ENCODE measurements at regions of chr17 and their contacts with region 1.

Region 1: GRCh38 chr17:73429440-73430164 is 117.8 kb upstream of the CDC42EP4 start:
- DNase-seq: peak; percentile 80 to 90 (median 88)
- H3K4me3 ChIP-seq: peak overlapping the region in 3 of 59 donors; percentile 8 to 31 (median 28)
- H3K27ac ChIP-seq: no peak overlapping the region
- H3K27me3 ChIP-seq: no peaks in the 10 kb centered on the region
- CTCF ChIP-seq: peak; percentile 80 to 100 (median 98)

Region 2: DNA sequence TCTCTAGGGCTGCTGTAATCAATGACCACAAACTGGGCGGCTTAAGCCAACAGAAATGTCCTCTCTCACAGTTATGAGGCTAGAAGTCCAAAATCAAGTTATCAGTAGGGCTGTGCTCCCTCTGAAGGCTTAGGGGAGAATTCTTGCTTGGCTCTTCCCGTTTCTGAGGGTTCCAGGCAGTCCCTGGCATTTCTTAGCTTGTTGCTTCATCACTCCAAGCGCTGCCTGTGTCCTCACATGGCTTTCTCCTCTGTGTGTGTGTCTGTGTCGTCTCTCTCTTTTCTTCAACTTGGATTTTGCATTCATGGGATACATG is 104.1 kb before region 1 on chr17:
- intact Hi-C with region 1: no loop called
- DNase-seq: no peak
- H3K4me3 ChIP-seq: no peak overlapping the region
- H3K27ac ChIP-seq: no peak overlapping the region
- H3K27me3 ChIP-seq: no peaks in the 10 kb centered on the region
- CTCF ChIP-seq: no peak

Region 3: DNA sequence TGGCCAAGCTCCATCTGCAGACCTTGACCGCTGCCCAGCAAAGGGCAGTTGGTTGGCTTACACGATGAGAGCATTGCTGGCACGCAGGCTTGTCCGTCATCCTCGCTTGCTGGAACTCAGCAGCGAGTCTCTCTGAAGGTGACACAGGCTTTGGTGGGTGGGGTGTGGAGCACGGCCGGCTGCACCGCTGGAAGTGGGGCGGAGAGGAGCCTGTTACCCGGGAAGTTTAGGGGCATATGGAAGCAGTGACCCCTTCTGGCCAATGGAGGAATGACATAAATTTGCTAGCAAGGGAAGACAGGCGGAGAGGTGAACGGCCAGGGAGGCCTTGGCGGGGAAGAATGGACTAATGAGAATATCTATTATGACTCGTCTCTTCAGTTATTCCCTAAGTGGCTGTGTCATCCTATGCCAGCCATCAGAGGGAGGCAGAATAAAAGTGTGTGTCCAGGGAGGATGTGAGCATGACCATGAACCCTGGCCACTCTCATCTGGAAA is 280.5 kb after region 1 on chr17:
- intact Hi-C with region 1: loop called in 1 of 2 experiments (anchors 5 kb)
- DNase-seq: peak in 6 of 10 donors; percentile 38 to 59 (median 48)
- H3K4me3 ChIP-seq: peak overlapping the region in 1 of 59 donors; percentile 42
- H3K27ac ChIP-seq: no peak overlapping the region
- H3K27me3 ChIP-seq: peaks cover 0 to 25% (median 0%) of the 10 kb centered on the region in 45 donors
- CTCF ChIP-seq: peak; percentile 65 to 93 (median 81)

Region 4: DNA sequence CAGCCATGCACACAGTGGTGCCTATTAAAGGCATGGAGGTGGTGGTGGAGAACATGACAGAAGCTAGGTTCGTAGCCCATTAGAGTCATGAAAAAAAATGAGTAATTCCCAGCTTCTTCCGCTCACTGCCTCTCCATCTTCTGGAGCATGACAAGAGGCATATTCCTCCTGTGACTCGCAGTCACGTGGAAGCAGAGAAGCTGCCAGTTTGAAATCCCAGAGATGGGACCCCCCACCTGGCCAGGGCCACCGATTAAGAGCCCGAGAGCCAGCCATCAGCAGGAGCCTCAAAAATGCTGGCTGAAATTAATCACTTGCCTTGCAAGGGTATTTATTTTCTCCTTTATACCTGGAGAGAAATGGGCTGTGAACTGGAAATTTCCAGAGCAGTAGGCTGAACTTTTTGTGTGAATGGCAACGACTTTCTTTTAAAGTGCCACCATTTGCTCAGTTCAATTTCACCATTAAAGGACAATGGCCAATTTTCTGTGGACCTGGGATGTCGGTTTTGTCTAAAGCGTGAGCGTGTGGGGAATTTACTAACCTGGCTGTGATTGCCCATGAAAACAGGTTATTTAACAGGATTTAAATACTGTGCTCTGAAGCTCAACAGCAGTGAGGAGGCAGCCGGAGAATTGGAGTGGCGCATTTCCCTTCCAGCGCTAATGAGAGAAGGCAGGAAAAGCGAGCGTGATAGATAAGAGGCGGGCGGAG is 404.3 kb after region 1 on chr17:
- intact Hi-C with region 1: loop called in 1 of 2 experiments (anchors 10 kb)
- DNase-seq: no peak
- H3K4me3 ChIP-seq: no peak overlapping the region
- H3K27ac ChIP-seq: no peak overlapping the region
- H3K27me3 ChIP-seq: peaks cover 0 to 8% (median 0%) of the 10 kb centered on the region in 45 donors
- CTCF ChIP-seq: no peak

Region 5: GRCh38 chr17:73841431-73842060 is 411.9 kb after region 1 on chr17:
- intact Hi-C with region 1: loop called (anchors 5 to 10 kb)
- DNase-seq: no peak
- H3K4me3 ChIP-seq: no peak overlapping the region
- H3K27ac ChIP-seq: no peak overlapping the region
- H3K27me3 ChIP-seq: peaks cover 0 to 6% (median 0%) of the 10 kb centered on the region in 45 donors
- CTCF ChIP-seq: peak in 54 of 56 donors; percentile 22 to 75 (median 54)

Region 6: DNA sequence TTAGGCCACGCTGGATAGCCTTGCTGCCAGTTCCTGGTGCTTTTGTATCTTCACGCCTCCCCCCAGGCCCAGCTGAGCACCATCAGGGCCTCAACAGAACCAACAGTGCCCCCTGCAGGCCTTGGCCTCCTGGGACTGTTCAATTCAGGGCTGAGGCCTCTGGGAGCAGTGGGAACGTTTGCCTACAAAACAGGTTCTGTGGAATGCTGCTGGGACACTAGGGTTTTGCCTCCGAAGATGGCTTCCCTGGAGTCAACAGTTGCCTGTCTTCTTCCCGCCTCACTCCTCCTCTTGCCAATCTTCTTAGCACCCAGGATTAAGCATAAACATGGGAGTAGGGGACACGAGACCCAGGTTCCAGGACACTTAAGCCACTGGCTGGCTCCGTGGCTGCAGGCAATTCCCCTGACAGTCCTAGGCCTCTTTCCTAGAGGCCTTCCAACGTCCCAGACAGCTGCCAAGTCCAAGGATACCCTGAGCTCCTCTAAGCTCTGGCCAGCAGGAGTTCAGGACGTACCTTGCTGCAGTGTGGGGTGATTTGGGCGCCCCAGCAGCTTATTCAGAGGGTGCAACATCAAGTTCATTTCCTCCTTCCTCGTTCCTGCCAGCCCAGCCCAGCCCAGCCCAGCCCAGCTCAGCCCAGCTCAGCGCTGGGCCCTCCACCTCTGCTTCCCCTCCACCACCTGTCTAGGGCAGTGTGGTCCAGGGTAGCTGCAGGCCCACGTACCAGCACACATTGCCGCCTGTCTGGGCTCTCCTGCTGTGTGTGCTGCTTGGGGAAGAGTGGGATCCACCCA is 527.3 kb after region 1 on chr17:
- intact Hi-C with region 1: loop called (anchors 2 to 10 kb)
- DNase-seq: peak; percentile 27 to 85 (median 78)
- H3K4me3 ChIP-seq: no peak overlapping the region
- H3K27ac ChIP-seq: no peak overlapping the region
- H3K27me3 ChIP-seq: peaks cover 0 to 4% (median 0%) of the 10 kb centered on the region in 45 donors
- CTCF ChIP-seq: peak; percentile 13 to 85 (median 70)

Region 7: DNA sequence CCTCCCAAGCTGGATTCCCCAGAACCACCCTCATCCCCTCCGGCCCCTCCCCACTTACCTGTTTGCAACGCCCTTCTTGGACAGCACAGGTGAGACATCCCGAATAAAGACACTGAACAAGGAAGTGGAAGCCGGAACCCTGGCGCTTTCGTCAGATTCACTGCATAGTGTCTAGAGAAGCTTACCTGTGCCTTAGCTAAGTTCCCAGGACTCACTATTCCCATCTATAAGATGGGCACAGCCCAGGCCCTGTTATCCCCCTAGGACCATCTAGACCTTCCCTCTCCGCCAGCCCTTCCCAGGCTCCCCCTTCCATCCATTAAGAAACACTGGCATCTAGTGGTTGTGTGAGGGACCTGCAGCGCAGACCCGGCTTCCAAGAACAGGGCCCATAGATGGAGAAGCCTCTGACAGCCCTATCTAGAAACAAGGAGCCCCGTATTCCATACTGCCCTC is 747.0 kb after region 1 on chr17:
- intact Hi-C with region 1: loop called (anchors 2 kb)
- DNase-seq: peak; percentile 46 to 82 (median 76)
- H3K4me3 ChIP-seq: no peak overlapping the region
- H3K27ac ChIP-seq: peak overlapping the region in 7 of 59 donors; percentile 51 to 62 (median 55)
- H3K27me3 ChIP-seq: peaks cover 0 to 10% (median 0%) of the 10 kb centered on the region in 45 donors
- CTCF ChIP-seq: peak; percentile 46 to 94 (median 83)